Naive thymus-derived CD4-positive, alpha-beta T cell (primary cell): ENCODE measurements at regions of chrX and their contacts with region 1.

Region 1: DNA sequence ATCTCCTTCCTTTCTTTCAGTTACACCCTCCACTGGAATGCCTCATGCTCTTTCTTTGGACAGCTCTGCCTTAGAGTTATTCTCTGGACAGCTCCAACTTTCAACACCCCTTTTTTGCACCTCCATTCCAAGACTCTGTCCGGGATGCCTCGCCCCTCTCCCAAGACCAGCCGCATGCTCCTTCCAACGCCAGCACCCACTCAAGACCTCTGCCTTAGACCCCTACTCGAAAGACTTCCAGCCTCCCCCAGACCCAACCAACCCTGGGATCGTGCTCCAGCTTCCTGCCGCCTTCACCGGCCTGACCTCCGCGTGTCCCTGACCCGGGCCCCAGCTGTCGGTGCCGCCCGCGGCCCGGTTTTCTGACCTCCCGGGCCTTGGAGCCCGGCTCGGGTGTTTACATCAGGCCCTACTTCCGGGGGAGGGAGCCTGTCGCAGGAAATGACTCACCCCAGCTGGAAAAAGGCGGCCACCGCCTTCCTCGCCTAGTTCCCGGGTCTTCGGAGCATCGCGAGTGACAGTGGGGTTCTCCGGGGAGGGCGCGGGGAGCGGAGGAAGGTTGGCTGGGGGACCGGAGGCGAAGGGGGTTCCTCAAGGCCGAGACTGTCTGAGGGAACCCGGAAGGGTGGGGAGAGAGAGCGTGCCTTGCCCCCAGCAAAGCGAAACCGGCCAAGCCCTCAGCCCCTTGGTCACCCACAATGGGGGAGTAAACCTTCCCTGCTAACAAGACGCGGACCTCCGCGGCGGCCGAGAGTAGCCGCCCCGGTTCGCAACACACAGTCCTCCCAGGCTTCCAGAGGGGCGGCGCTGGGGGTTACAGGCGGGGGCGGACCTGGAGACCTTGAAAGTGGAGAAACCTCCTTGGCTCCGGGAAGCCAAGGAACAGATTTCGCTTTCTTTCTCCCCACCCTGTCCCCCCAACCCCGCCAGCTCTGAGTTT is at the start of gene WDR45:
- DNase-seq: peak; percentile 43 to 76 (median 69)
- ATAC-seq: peak; percentile 88
- H3K4me3 ChIP-seq: peak within 1 kb of the TSS; percentile 81
- H3K4me3 Mint-ChIP-seq: peak within 1 kb of the TSS; percentile 69 to 100 (median 91)
- H3K27ac ChIP-seq: peak within 1 kb of the TSS; percentile 95
- H3K27ac Mint-ChIP-seq: peak within 1 kb of the TSS; percentile 94 to 100 (median 99)
- H3K4me1 ChIP-seq: no peaks in the 10 kb centered on the region
- H3K4me1 Mint-ChIP-seq: peaks cover 6 to 18% (median 8%) of the 10 kb centered on the region in 7 donors
- H3K27me3 ChIP-seq: no peaks in the 10 kb centered on the region
- H3K27me3 Mint-ChIP-seq: no peaks in the 10 kb centered on the region
- total RNA-seq, gene WDR45: 51.4 to 115 (median 80.0) TPM

Region 2: GRCh38 chrX:48071064-48071985 is 1008.4 kb before region 1 on chrX and contains the start of gene ZNF630:
- CTCF ChIA-PET with region 1: no interaction called
- POLR2A ChIA-PET with region 1: no interaction called
- intact Hi-C with region 1: no loop called
- DNase-seq: peak; percentile 13 to 49 (median 35)
- ATAC-seq: peak; percentile 86
- H3K4me3 ChIP-seq: peak within 1 kb of the TSS; percentile 79
- H3K4me3 Mint-ChIP-seq: peak within 1 kb of the TSS; percentile 89 to 95 (median 92)
- H3K27ac ChIP-seq: peak within 1 kb of the TSS; percentile 80
- H3K27ac Mint-ChIP-seq: peak within 1 kb of the TSS; percentile 87 to 97 (median 94)
- H3K4me1 ChIP-seq: peaks cover 0 to 4% of the 10 kb centered on the region in 2 donors
- H3K4me1 Mint-ChIP-seq: peaks cover 0 to 26% (median 15%) of the 10 kb centered on the region in 7 donors
- H3K27me3 ChIP-seq: no peaks in the 10 kb centered on the region
- H3K27me3 Mint-ChIP-seq: no peaks in the 10 kb centered on the region
- total RNA-seq, gene ZNF630: 0.53 to 5.1 (median 2.2) TPM

Region 3: DNA sequence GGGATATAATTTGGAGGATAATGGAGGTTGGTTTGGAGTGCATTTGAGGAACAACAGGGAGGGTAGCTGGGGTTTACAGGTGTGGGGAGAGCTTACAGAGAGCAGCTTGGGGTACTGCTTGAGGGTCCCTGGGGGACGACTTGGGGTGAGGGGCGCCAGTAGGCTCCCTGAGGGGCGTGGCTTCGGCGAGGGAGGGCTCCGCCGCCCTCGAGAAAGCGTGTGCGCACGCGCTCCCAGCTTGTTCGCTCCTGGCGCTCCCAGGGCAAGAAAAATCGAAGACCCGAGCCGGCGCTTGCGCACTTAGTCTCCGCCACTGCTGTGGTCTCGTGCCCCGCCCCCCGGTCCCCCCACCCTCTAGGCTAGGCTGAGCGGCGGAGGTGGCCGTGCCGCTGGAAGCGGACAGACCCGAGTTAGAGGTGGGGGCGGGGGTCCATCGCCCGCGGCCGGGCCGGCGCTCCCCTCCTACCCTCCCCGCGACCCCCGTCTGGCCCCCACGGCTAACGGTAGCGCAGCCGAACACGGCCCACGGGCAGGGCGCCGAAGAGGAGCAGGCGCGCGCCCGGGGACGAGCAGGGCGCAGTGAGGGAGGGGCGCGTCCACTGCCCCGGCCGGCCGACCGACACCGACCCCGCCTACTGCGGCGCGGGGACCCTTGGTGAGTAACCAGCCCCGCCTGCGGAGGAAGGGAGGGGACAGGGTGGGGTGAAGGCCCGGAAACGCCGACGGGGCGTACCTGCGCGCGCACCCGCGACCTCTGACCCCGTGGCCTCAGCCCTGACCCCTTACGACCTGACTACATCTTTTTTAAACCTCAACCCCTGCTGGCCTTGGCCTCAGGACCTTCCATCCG is 26.3 kb before region 1 on chrX:
- CTCF ChIA-PET with region 1: no interaction called
- POLR2A ChIA-PET with region 1: interaction called, 3 read pairs
- intact Hi-C with region 1: loop called in 1 of 2 experiments (anchors 1 kb)
- DNase-seq: peak; percentile 22 to 60 (median 51)
- ATAC-seq: peak; percentile 91
- H3K4me3 ChIP-seq: peak overlapping the region; percentile 48
- H3K4me3 Mint-ChIP-seq: peak overlapping the region; percentile 76 to 92 (median 88)
- H3K27ac ChIP-seq: peak overlapping the region; percentile 92
- H3K27ac Mint-ChIP-seq: peak overlapping the region; percentile 86 to 96 (median 93)
- H3K4me1 ChIP-seq: peaks cover 8% of the 10 kb centered on the region in 2 donors
- H3K4me1 Mint-ChIP-seq: peaks cover 16 to 37% (median 30%) of the 10 kb centered on the region in 7 donors
- H3K27me3 ChIP-seq: no peaks in the 10 kb centered on the region
- H3K27me3 Mint-ChIP-seq: peaks cover 0 to 3% (median 0%) of the 10 kb centered on the region in 5 donors

Region 4: DNA sequence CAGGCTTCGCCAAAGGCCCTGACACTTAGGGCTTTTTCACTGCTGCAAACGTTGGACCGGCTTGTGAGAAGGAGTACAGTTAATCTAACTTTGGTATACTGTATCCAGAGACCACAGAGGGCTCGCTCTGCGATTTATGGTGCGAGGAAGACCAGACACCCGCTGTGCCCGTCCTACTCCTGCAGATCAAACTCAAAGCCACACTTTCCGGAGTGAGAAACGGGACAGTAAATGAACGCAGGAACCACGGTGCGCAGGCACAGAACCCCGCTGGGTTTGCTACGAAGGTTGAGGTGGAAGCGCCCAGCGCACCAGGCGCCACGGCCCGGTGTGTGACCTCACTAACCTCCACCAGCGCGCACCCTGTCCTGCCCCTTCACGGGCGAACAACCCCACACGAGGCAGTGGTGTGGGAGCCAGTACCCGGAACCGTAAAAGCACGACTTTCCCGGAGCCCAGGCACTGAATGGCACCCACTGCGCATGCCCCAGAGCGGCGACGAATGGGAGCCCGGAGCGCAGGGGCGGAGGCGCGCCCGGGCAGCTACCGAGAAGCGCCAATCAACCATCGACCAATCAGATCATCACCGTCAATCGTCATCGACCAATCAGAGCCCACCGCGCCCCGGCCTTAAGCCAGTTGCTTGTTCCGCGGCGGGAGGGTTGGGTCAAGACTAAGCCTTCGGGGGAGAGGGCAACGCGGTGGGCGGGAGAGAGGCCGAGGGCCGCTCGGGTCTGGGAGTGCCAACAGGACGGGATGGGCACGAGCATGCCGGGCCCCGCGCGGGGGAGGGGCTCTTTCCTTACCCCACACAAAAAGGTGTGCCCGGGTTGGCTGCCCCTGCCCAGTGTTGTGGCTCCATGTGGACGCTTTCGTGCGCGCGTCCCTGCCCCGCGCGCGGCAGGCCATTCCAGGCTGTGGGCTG is 21.2 kb after region 1 on chrX:
- CTCF ChIA-PET with region 1: no interaction called
- POLR2A ChIA-PET with region 1: interaction called, 12 read pairs
- intact Hi-C with region 1: loop called (anchors 1 kb)
- DNase-seq: peak; percentile 75 to 90 (median 87)
- ATAC-seq: peak; percentile 97
- H3K4me3 ChIP-seq: peak overlapping the region; percentile 82
- H3K4me3 Mint-ChIP-seq: peak overlapping the region; percentile 80 to 93 (median 90)
- H3K27ac ChIP-seq: peak overlapping the region; percentile 78
- H3K27ac Mint-ChIP-seq: peak overlapping the region; percentile 74 to 95 (median 91)
- H3K4me1 ChIP-seq: no peaks in the 10 kb centered on the region
- H3K4me1 Mint-ChIP-seq: peaks cover 0 to 8% (median 0%) of the 10 kb centered on the region in 7 donors
- H3K27me3 ChIP-seq: no peaks in the 10 kb centered on the region
- H3K27me3 Mint-ChIP-seq: no peaks in the 10 kb centered on the region